A549 (cell line): ENCODE measurements at regions of chr6 and their contacts with region 1.

Region 1: DNA sequence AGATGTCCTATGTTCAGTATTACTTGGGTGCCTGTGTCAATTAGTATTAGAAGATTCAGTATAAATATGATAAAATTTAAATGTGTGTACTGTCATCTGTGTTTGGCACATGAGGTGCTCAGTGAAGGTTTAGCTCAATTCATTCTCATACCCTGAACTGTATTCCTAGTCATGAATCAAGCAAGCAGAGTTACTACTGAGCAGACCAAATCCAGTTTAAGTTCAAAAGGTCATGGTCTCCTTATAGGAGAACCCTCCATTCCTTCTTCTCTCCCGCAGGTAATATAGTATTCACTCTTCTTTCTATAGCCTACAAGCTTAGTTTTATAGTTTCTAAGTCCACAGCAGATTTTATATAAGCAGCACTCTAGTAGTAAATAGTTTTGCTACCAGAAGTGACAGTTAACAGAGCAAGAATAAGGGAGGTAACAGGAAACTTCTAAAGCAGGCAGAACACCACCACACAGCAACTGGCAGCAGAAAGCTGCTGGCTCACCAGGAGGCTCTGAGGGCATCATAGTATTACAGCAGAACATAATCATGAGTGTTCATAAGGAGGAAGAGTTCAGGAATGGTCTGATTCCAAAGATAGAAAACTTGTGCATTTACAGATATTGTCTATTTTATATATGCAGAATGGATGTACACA is 133.2 kb downstream of the SLC16A10 start:
- DNase-seq: no peak
- ATAC-seq: no peak
- H3K4me3 ChIP-seq: no peak overlapping the region
- H3K27ac ChIP-seq: no peak overlapping the region
- H3K4me1 ChIP-seq: no peaks in the 10 kb centered on the region
- CTCF ChIP-seq: no peak
- EP300 ChIP-seq: no peak
- POLR2A ChIP-seq: no peak
- RAD21 ChIP-seq: no peak

Region 2: DNA sequence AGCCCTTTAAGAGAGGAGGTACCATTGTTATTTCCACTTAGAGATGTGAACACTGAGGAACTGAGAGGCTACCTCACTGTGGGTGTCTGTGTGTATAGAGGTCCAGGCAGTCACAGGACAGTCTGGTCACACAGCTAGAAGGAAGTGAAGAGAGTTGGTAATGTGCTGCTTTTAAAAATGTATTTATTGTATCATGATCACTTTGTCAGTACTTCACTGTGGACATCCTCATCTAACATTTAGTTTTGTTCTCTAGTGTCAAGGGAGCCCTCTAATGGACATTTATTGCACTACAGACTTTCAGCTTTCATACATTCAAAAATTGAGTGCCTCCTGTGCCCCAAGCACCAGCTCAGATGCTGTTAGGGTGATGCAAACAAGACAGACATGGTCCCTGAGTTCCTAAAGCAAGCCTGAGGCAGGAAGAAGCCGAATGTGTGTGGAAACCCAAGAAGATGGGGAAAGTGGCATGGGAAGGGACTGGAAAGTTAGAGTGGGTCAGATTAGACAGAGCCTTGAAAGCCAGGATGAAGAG is 10.2 kb before region 1 on chr6:
- CTCF ChIA-PET with region 1: interaction called, 15 read pairs
- POLR2A ChIA-PET with region 1: no interaction called
- DNase-seq: peak; percentile 51 to 54
- ATAC-seq: peak; percentile 78 to 85; a peak in 5 of 6 replicates
- H3K4me3 ChIP-seq: no peak overlapping the region
- H3K27ac ChIP-seq: no peak overlapping the region
- H3K4me1 ChIP-seq: no peaks in the 10 kb centered on the region
- CTCF ChIP-seq: peak; percentile 66
- EP300 ChIP-seq: no peak
- POLR2A ChIP-seq: no peak
- RAD21 ChIP-seq: peak; percentile 73 to 74